CD4-positive, alpha-beta memory T cell (primary cell): ENCODE measurements at regions of chr19 and their contacts with region 1.

Region 1: GRCh38 chr19:13880059-13881043 is 3.4 kb downstream of the NANOS3 start:
- DNase-seq: peak; percentile 95 to 96 (median 96)
- H3K4me3 ChIP-seq: peak overlapping the region in 1 of 2 donors; percentile 25
- H3K4me3 Mint-ChIP-seq: peak overlapping the region; percentile 56 to 85 (median 66)
- H3K27ac ChIP-seq: peak overlapping the region; percentile 64
- H3K27ac Mint-ChIP-seq: peak overlapping the region; percentile 78 to 89 (median 84)
- H3K4me1 ChIP-seq: peaks cover 39% of the 10 kb centered on the region
- H3K4me1 Mint-ChIP-seq: peaks cover 22 to 44% (median 35%) of the 10 kb centered on the region in 4 donors
- H3K27me3 ChIP-seq: no peaks in the 10 kb centered on the region
- H3K27me3 Mint-ChIP-seq: no peaks in the 10 kb centered on the region

Region 2: GRCh38 chr19:13794757-13795589 is 85.4 kb before region 1 on chr19 and contains the start of gene ZSWIM4:
- CTCF ChIA-PET with region 1: no interaction called
- POLR2A ChIA-PET with region 1: no interaction called
- intact Hi-C with region 1: no loop called
- DNase-seq: peak; percentile 81 to 85 (median 82)
- H3K4me3 ChIP-seq: peak within 1 kb of the TSS; percentile 61 to 66
- H3K4me3 Mint-ChIP-seq: peak within 1 kb of the TSS; percentile 91 to 97 (median 96)
- H3K27ac ChIP-seq: peak within 1 kb of the TSS; percentile 53
- H3K27ac Mint-ChIP-seq: peak within 1 kb of the TSS; percentile 92 to 98 (median 95)
- H3K4me1 ChIP-seq: peaks cover 23% of the 10 kb centered on the region
- H3K4me1 Mint-ChIP-seq: peaks cover 21 to 39% (median 31%) of the 10 kb centered on the region in 4 donors
- H3K27me3 ChIP-seq: no peaks in the 10 kb centered on the region
- H3K27me3 Mint-ChIP-seq: no peaks in the 10 kb centered on the region
- total RNA-seq, gene ZSWIM4: 6.4 to 6.6 TPM

Region 3: GRCh38 chr19:13861732-13862531 is 18.4 kb before region 1 on chr19:
- CTCF ChIA-PET with region 1: interaction called, 13 read pairs
- POLR2A ChIA-PET with region 1: no interaction called
- intact Hi-C with region 1: no loop called
- DNase-seq: peak; percentile 81 to 94 (median 84)
- H3K4me3 ChIP-seq: peak overlapping the region; percentile 55 to 68
- H3K4me3 Mint-ChIP-seq: peak overlapping the region; percentile 91 to 98 (median 95)
- H3K27ac ChIP-seq: peak overlapping the region; percentile 96
- H3K27ac Mint-ChIP-seq: peak overlapping the region; percentile 98 to 100 (median 100)
- H3K4me1 ChIP-seq: peaks cover 35% of the 10 kb centered on the region
- H3K4me1 Mint-ChIP-seq: peaks cover 24 to 54% (median 38%) of the 10 kb centered on the region in 4 donors
- H3K27me3 ChIP-seq: peaks cover 19% of the 10 kb centered on the region
- H3K27me3 Mint-ChIP-seq: peaks cover 16 to 20% of the 10 kb centered on the region in 2 donors

Region 4: DNA sequence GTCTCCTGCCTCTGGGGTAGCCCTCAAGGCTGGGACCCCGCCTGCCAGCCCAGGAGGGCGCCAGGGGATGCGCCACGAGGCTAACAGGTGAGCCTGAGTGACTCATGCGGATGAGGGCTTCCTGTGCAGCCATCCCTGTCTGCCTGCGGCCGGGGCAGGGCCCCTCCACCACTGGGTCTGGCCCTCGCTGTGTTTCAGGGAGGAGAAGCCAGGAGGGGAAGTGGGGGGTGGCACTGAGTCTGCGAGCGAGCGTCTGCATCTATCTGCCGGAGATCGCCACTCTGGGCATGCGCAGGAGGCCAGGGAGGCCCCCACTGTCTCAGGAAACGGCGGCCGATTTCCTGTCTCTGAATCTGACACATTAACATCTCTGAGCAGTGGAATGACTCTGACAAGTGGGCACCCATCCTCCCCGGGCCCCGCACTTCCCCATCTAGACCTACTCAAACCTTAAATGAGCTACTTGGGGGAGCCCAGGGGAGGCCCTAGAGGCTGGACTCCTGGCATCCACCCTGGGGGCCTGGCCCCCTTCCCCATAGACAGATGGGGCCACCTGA is 106.1 kb after region 1 on chr19:
- CTCF ChIA-PET with region 1: no interaction called
- POLR2A ChIA-PET with region 1: interaction called, 3 read pairs
- intact Hi-C with region 1: loop called (anchors 1 kb)
- DNase-seq: peak; percentile 96 to 100 (median 98)
- H3K4me3 ChIP-seq: peak overlapping the region; percentile 43 to 49
- H3K4me3 Mint-ChIP-seq: peak overlapping the region; percentile 69 to 93 (median 74)
- H3K27ac ChIP-seq: peak overlapping the region; percentile 95
- H3K27ac Mint-ChIP-seq: peak overlapping the region; percentile 95 to 100 (median 98)
- H3K4me1 ChIP-seq: peaks cover 84% of the 10 kb centered on the region
- H3K4me1 Mint-ChIP-seq: peaks cover 35 to 93% (median 65%) of the 10 kb centered on the region in 4 donors
- H3K27me3 ChIP-seq: no peaks in the 10 kb centered on the region
- H3K27me3 Mint-ChIP-seq: no peaks in the 10 kb centered on the region

Region 5: DNA sequence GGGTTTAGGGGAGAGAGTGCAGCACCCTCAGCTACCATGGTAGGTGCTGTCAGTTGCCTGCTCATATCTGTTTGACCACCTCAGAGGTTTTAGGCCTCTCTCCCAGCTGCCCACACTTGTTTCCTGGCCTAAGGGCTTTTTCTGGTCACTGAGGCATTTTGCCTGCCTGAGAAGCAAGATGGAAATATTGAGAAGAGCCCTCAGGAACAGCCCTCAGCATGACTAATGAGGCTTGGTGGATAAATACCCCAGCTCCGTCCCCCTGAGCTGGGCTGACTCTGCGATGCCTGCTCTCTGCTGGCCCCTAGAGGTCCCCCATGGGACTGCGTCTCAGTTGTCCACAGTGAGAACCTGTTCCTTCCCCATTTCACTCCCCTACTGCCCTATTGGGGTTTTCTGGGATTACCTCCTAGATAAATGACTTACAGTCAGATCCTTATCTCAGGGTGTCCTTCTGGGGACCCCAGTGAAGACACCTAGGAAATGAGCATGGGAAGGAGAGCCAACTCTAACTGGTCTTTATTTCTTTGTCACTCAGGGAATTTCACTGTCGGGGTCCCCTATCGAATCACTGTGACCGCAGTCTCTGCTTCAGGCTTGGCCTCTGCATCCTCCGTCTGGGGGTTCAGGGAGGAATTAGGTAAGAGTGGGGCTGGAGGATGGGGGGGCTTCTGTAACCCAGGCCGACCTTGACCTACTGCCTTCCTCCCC is 168.2 kb after region 1 on chr19:
- CTCF ChIA-PET with region 1: interaction called, 111 read pairs
- POLR2A ChIA-PET with region 1: interaction called, 10 read pairs
- intact Hi-C with region 1: loop called (anchors 1 kb)
- DNase-seq: peak; percentile 63 to 73 (median 68)
- H3K4me3 ChIP-seq: no peak overlapping the region
- H3K4me3 Mint-ChIP-seq: no peak overlapping the region
- H3K27ac ChIP-seq: peak overlapping the region; percentile 39
- H3K27ac Mint-ChIP-seq: peak overlapping the region; percentile 26 to 85 (median 42)
- H3K4me1 ChIP-seq: peaks cover 5% of the 10 kb centered on the region
- H3K4me1 Mint-ChIP-seq: peaks cover 2 to 5% (median 3%) of the 10 kb centered on the region in 4 donors
- H3K27me3 ChIP-seq: no peaks in the 10 kb centered on the region
- H3K27me3 Mint-ChIP-seq: no peaks in the 10 kb centered on the region

Region 6: DNA sequence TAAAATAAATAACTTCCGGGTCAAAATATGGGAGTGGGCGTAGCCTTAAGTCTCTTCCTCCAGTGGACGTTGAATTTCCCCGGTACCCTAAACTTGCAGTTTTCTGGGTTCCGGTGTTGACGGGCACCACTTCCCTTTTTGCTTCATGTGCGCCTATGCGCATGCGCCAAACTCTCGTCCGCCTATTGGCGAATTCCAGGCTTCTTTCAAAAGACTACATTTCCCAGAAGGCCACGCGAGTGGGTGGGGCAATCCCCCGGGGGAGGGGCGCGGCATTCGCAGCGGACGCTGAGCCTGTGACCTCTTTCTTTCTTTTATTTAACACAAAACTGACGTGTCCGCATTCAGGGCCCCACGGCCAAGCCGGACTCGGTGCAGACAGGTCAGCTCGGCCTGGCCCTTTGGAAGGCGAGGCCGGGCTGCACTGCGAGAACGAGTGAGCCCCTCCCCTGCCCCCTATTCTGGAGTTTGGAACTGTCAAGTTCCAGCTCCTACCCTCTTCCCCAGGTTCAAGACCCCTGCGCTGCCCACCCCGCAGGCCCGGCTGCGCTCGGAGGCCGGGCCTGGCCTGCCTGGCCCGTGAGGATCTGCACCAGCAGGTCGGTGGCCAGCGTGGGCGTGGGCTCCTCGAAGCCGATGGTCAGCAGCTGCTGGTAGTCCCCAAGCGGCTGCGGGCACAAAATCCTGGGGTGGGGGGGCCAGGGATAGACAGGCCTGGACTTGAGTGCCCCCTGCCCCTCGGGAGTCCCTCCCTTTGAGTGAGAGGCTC is 201.2 kb after region 1 on chr19:
- CTCF ChIA-PET with region 1: interaction called, 41 read pairs
- POLR2A ChIA-PET with region 1: interaction called, 17 read pairs
- intact Hi-C with region 1: no loop called
- DNase-seq: peak; percentile 98 to 99 (median 99)
- H3K4me3 ChIP-seq: peak overlapping the region; percentile 61 to 74
- H3K4me3 Mint-ChIP-seq: peak overlapping the region; percentile 87 to 97 (median 92)
- H3K27ac ChIP-seq: peak overlapping the region; percentile 68
- H3K27ac Mint-ChIP-seq: peak overlapping the region; percentile 84 to 98 (median 95)
- H3K4me1 ChIP-seq: peaks cover 18% of the 10 kb centered on the region
- H3K4me1 Mint-ChIP-seq: peaks cover 5 to 28% (median 17%) of the 10 kb centered on the region in 4 donors
- H3K27me3 ChIP-seq: no peaks in the 10 kb centered on the region
- H3K27me3 Mint-ChIP-seq: no peaks in the 10 kb centered on the region

Region 7: GRCh38 chr19:14198384-14199376 is 318.3 kb after region 1 on chr19:
- CTCF ChIA-PET with region 1: no interaction called
- POLR2A ChIA-PET with region 1: no interaction called
- intact Hi-C with region 1: loop called (anchors 1 kb)
- DNase-seq: no peak
- H3K4me3 ChIP-seq: no peak overlapping the region
- H3K4me3 Mint-ChIP-seq: no peak overlapping the region
- H3K27ac ChIP-seq: no peak overlapping the region
- H3K27ac Mint-ChIP-seq: no peak overlapping the region
- H3K4me1 ChIP-seq: peaks cover 3% of the 10 kb centered on the region
- H3K4me1 Mint-ChIP-seq: peaks cover 15 to 47% (median 33%) of the 10 kb centered on the region in 4 donors
- H3K27me3 ChIP-seq: no peaks in the 10 kb centered on the region
- H3K27me3 Mint-ChIP-seq: peaks cover 0 to 1% of the 10 kb centered on the region in 2 donors